ENCODE measurements at regions of chr14 and their contacts with region 1.

Region 1: DNA sequence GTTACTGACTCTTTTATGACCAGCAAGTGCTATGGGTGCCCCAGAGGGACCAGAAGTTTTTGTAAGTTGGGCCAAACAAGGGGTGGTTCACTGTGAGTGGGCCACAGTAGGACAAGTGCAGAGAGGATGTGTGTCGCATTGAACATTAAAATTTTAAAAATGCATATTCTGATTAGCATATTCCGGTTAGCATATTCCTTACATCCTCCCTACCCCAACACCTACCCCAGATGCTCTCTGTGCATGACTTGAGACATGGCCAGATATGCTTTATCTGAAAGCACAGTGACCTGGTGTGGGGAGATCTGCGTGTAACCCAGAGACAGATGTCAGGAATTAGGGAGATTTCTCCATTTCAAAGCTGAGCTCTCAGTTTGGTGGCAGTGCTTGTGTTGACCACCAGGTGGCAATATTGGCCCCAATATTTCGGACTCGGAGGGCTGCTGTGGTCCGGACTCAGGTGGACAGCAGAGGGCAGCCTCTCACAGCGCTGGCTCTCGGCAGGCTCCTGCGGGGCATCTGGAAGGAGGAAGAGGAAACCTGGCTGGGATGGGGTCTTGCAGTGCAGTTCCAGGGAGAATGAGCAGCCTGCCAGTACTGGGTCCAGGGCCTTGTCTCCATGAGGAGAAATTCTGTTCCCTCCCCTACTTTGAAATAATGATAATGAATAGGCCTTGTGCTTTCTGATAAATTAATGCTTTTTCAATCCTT is 1.6 kb upstream of the CEBPE start:
- DNase-seq: no peak
- H3K4me3 ChIP-seq: no peak overlapping the region
- H3K27ac ChIP-seq: peak overlapping the region; percentile 68
- H3K4me1 ChIP-seq: peaks cover 23% of the 10 kb centered on the region
- H3K27me3 ChIP-seq: no peaks in the 10 kb centered on the region
- CTCF ChIP-seq: peak; percentile 99 to 100 (median 100)
- POLR2A ChIP-seq: peak in 1 of 2 donors; percentile 26

Region 2: DNA sequence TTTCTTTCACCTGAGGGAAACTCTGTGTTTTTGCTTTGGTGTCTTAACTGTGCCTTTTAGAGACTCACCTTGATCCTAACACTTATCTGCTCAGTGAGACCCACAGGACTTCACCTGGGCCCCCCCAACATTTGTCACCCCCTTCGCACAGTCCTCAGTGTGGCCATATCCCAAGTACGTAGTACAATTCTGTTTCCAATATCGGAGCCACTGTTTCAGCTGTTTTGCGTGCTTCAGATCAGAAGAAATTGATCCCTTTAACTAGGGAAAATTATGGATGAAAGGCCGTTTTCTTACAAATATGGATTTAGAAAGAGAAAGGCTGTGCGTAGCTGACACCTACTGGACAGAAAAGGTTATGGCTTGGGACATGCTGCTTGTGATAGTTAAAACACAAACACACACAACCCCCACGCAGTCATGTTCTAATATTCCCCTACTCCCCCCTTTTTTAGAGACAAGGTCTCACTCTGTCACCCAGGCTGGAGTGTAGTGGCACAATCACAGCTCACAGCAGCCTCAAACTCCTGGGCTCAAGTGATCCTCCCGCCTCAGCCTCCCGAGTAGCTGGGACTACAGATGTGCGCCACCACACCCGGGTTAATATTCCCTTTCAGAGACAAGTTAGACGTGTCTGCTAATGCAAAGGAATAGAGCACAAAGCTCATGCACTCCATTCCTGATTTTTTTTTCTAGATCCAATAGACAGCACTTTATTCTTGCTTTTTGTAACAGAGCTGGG is 66.4 kb after region 1 on chr14:
- intact Hi-C with region 1: loop called (anchors 2 kb)
- DNase-seq: no peak
- H3K4me3 ChIP-seq: no peak overlapping the region
- H3K27ac ChIP-seq: no peak overlapping the region
- H3K4me1 ChIP-seq: peaks cover 10% of the 10 kb centered on the region
- H3K27me3 ChIP-seq: no peaks in the 10 kb centered on the region
- CTCF ChIP-seq: peak; percentile 71 to 93 (median 79)
- POLR2A ChIP-seq: no peak

Region 3: DNA sequence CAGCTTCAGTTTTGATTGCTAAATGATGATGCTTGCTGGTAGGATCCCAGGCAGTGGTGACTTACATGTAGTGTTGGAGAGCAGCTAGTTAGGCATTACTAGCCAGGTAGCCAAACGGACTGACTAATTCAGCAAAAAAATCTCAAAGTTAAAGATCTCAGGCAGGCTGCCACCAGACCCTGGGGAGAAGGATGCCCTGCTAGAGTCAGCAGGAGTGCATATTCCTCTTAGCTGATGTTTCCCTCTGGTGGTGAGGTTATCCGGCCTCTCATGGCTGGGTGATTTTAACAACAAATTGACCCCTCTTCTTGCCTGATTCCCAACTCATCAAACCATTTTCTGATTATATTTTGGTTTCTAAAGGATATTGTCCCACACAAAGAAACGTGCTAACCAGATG is 241.5 kb after region 1 on chr14:
- intact Hi-C with region 1: no loop called
- DNase-seq: no peak
- H3K4me3 ChIP-seq: no peak overlapping the region
- H3K27ac ChIP-seq: no peak overlapping the region
- H3K4me1 ChIP-seq: peaks cover 52% of the 10 kb centered on the region
- H3K27me3 ChIP-seq: no peaks in the 10 kb centered on the region
- CTCF ChIP-seq: peak in 1 of 3 experiments; percentile 7
- POLR2A ChIP-seq: no peak